ENCODE measurements at regions of chr10 and their contacts with region 1.

Region 1: DNA sequence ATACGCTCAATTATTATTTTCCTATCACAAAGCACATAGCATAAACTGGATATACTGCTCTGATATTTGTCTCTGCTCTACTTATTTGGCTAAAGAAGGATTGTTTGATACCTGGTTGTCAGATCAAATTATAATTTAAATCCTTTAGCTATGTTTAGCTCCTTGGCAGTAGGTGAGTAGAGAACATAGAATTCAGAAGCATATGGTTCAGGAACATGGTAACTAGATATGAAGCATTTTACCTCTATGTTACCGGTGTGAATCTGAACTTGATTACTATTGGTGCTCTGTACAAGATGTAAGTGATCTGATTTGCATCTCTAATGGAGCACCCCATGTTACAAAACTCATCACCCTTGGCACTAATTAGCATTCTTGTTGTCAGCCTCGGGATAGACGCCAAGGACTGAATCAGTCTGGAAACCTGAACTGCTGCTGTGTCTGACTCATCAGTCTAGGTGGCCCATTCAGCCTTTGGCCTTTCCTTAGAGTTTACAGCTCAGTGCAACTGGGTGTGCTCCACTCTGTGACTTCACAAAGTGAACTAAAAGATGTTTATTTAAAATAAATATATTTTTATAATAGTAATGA is 12.3 kb upstream of the MYPN start:
- DNase-seq: peak; percentile 99
- ATAC-seq: peak; percentile 75
- H3K4me3 ChIP-seq: peak overlapping the region; percentile 10; the same call in 1 of the 2 replicates
- H3K27ac ChIP-seq: peak overlapping the region; percentile 94
- H3K4me1 ChIP-seq: peaks cover 95% of the 10 kb centered on the region
- H3K27me3 ChIP-seq: no peaks in the 10 kb centered on the region
- CTCF ChIP-seq: no peak

Region 2: GRCh38 chr10:68052463-68052862 is 44.5 kb before region 1 on chr10:
- CTCF ChIA-PET with region 1: no interaction called
- POLR2A ChIA-PET with region 1: interaction called, 11 read pairs
- intact Hi-C with region 1: no loop called
- DNase-seq: peak; percentile 36
- ATAC-seq: no peak
- H3K4me3 ChIP-seq: no peak overlapping the region
- H3K27ac ChIP-seq: no peak overlapping the region
- H3K4me1 ChIP-seq: peaks cover 15% of the 10 kb centered on the region
- H3K27me3 ChIP-seq: no peaks in the 10 kb centered on the region
- CTCF ChIP-seq: no peak